Posterior vena cava (tissue), 2 donors: ENCODE measurements at regions of chr3 and their contacts with region 1.

Region 1: DNA sequence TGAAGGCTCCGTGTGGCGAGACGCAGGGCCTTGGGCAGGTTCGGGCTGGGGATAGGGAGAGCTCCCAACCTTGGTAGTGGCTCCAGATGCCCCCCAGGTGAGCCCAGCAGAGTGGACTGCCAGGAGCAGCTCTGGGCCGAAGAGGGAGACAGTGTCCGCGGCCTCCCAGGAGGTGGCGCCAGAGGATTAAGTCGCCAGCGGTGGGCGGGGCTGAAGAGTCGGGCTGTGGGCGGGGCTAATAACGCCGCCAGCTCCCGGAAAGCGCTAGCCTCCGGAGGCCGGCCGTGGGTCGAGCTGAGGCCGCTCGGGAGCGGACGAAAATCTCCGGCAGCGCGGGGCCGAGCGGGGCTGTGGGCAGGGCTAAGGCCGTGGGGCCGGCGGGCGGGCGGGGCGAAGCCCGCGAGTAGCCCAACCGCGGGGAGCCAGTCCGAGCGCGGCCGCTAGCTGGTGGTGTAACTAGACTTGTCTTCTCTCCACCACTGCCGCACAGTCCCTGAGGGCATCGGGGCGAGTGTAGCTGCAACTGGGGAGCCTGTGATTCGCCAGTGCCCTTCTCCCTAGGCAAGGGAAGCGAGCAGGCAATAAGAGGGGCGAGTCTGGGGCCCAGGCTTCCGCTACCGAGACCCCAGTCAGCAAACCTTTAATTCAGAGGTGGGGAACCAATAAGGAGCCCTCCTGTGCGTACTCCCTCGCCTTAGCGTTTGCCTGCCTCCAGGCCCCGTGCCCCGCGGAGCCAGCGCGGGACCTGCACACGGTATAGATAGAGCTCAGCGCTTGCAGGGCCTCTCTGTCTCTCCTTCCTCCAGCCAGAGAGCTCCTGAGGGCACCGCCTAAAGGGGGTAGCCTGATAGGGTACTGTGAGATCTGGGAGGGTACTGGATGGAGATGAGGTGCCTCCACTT is 14.4 kb upstream of the BSN start:
- DNase-seq: peak; percentile 98

Region 2: DNA sequence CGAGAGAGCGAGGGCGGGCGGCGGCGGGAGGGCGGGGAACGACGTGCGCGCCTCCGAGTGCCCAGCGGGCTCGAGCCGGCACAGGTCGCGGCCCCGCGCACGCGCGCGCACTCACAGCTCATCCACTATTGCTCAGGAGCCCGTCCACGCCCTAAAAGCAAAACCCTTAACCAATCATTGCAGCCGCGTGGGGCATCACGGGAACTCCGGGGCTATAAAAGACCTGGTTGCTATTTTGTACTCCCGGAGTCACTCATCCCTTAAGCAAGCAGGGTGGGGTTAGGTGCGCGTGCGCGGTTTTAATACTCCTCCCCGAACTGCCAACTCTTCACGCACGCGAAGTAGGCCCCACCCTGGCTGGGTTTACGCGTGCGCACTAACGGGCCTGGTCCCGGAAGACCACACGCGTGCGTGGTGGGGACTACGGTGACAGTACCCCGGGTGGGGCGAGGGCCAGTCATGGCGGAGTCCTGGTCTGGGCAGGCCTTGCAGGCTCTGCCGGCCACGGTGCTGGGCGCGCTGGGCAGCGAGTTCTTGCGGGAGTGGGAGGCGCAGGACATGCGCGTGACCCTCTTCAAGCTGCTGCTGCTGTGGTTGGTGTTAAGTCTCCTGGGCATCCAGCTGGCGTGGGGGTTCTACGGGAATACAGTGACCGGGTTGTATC is 127.8 kb before region 1 on chr3 and contains the starts of genes RHOA and TCTA:
- intact Hi-C with region 1: no loop called
- DNase-seq: peak; percentile 100
- total RNA-seq, gene RHOA: 530 to 640 TPM
- total RNA-seq, gene TCTA: 20.8 to 33.6 TPM

Region 3: GRCh38 chr3:49673715-49674496 is 134.0 kb after region 1 on chr3 and contains the start of gene APEH:
- intact Hi-C with region 1: loop called (anchors 2 to 5 kb)
- DNase-seq: peak; percentile 99
- total RNA-seq, gene APEH: 51.8 to 52.5 TPM

Region 4: DNA sequence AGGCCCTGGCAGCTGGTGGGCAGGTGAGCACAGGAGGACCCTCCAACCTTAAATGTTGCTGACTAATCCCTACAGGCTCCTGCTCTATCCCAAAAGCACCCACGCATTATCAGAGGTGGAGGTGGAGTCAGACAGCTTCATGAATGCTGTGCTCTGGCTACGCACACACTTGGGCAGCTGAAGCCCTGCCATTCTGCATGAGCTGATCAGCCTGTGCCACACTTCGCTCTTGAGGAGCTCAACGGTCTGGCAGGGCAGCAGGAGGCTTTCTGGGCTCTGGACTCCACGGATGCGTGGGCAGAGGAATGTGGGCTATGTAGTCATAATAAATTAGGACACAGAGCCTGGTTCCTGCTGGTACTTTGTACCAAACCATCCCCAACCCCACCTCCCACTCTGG is 143.3 kb after region 1 on chr3:
- intact Hi-C with region 1: loop called in 1 of 2 experiments (anchors 5 kb)
- DNase-seq: no peak

Region 5: DNA sequence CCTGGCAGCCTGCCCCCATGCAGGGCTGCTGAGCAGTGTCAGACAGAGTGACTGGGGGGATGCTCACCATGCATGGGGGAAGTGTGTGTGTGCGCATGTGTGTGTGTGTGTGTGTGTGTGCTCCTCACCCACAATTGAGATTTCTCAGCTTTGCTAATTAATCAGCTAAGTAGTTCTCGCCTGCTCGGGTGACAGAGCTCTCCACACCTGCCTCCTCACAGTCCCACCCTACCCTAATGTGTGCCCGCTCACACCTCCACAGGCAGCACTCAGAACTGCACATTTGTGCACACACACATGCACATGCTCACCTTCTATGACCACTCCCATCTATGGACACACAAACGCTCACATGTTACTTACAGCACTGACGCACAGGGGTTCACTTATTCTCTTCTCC is 926.3 kb after region 1 on chr3:
- intact Hi-C with region 1: no loop called
- DNase-seq: no peak